ENCODE measurements at regions of chr15 and their contacts with region 1.

Region 1: DNA sequence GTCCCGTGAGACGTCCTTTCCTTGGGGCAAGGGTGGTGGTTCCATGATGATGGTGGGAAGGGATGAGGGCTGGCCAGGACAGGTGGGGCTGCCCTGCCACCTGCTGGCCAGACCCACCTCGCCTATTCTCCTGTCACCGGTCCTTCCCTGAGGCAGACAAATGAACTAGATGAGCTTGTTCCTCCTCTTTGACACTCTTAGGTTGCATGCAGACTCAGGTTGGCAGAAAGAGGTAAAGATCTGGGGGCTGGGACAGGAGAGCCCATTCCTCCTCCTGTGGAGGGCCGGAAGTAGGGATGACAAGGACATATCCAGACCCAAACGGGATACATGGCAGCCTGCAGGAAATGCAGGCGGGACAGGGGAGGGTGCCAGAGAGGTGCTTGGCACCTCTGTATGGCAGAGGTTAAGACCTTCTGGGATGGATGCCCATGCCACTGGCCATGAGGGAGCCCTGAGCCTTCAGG is 38.6 kb downstream of the ACSBG1 start:
- DNase-seq: no peak
- ATAC-seq: peak; percentile 99
- H3K4me3 ChIP-seq: no peak overlapping the region
- H3K27ac ChIP-seq: no peak overlapping the region
- H3K4me1 ChIP-seq: no peaks in the 10 kb centered on the region
- H3K27me3 ChIP-seq: peaks cover 0 to 2% of the 10 kb centered on the region in 2 experiments; a peak in 2 of 4 replicates
- CTCF ChIP-seq: peak; percentile 89 to 98 (median 93); a peak in 5 of 6 replicates
- EP300 ChIP-seq: no peak
- POLR2A ChIP-seq: no peak
- RAD21 ChIP-seq: peak; percentile 85

Region 2: DNA sequence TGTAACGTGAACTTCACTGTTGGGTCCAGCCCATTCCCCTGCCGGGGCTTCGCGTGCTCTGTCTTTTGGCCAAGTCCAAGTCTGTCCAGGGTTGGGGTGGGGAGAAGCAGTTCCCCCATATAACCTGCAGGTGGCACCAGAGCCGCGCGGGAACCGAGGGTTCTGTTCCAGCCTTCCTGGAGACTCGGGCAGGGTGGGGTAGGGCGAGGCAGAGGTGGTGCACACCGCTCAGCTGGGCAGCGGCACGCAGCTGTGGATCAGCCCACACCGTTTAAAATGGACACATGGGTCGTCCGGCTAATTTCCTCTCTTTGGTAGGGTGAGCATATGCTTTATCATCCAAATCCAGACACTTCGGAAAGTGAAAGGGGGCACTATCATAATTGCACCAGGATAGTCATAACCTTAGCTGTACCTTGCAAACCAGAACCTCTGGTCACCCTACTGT is 236.3 kb before region 1 on chr15:
- CTCF ChIA-PET with region 1: interaction called, 24 read pairs
- POLR2A ChIA-PET with region 1: interaction called, 3 read pairs
- RAD21 ChIA-PET with region 1: interaction called, 14 read pairs
- SMC1A ChIA-PET with region 1: interaction called, 20 read pairs
- in situ Hi-C with region 1: no loop called
- intact Hi-C with region 1: loop called (anchors 1 kb)
- DNase-seq: peak; percentile 13
- ATAC-seq: peak; percentile 98
- H3K4me3 ChIP-seq: peak overlapping the region; percentile 39; the same call in 1 of the 2 replicates
- H3K27ac ChIP-seq: no peak overlapping the region
- H3K4me1 ChIP-seq: peaks cover 6% of the 10 kb centered on the region
- H3K27me3 ChIP-seq: no peaks in the 10 kb centered on the region
- CTCF ChIP-seq: peak; percentile 93 to 98 (median 95)
- EP300 ChIP-seq: no peak
- POLR2A ChIP-seq: no peak
- RAD21 ChIP-seq: peak; percentile 93

Region 3: DNA sequence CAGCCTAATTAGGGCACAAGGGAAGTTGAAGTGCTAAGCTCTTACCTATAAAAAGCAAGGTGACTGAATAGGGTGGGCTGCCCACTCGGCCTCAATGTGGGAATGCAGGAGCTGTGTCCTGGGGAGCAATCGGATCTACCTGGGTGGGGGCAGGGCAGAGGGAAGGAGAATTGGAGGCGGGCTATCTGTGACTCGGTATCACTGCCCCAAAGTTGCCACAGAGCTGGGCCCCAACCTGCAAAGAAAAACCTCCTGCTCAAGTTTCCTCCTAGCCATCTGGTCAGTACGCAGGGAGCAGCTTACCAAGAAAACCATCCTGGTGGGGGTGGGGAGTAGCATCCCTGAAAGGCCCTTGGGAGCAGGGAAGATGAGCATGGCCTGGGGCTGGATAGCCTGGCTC is 75.2 kb before region 1 on chr15:
- CTCF ChIA-PET with region 1: interaction called, 200 read pairs
- POLR2A ChIA-PET with region 1: no interaction called
- RAD21 ChIA-PET with region 1: interaction called, 16 read pairs
- SMC1A ChIA-PET with region 1: interaction called, 25 read pairs
- in situ Hi-C with region 1: no loop called
- intact Hi-C with region 1: no loop called
- DNase-seq: no peak
- ATAC-seq: no peak
- H3K4me3 ChIP-seq: no peak overlapping the region
- H3K27ac ChIP-seq: no peak overlapping the region
- H3K4me1 ChIP-seq: no peaks in the 10 kb centered on the region
- H3K27me3 ChIP-seq: no peaks in the 10 kb centered on the region
- CTCF ChIP-seq: no peak
- EP300 ChIP-seq: no peak
- POLR2A ChIP-seq: no peak
- RAD21 ChIP-seq: no peak

Region 4: GRCh38 chr15:78149068-78149804 is 46.5 kb before region 1 on chr15 and contains the start of gene IDH3A:
- CTCF ChIA-PET with region 1: interaction called, 7 read pairs
- POLR2A ChIA-PET with region 1: no interaction called
- RAD21 ChIA-PET with region 1: interaction called, 23 read pairs
- SMC1A ChIA-PET with region 1: interaction called, 8 read pairs
- in situ Hi-C with region 1: no loop called
- intact Hi-C with region 1: no loop called
- DNase-seq: peak; percentile 80
- ATAC-seq: peak; percentile 91
- H3K4me3 ChIP-seq: peak within 1 kb of the TSS; percentile 87
- H3K27ac ChIP-seq: peak within 1 kb of the TSS; percentile 84
- H3K4me1 ChIP-seq: peaks cover 13% of the 10 kb centered on the region
- H3K27me3 ChIP-seq: no peaks in the 10 kb centered on the region
- CTCF ChIP-seq: no peak
- EP300 ChIP-seq: no peak
- POLR2A ChIP-seq: peak; percentile 94
- RAD21 ChIP-seq: no peak
- polyA plus RNA-seq, gene IDH3A: 197 to 231 TPM

Region 5: GRCh38 chr15:78177447-78177873 is 18.3 kb before region 1 on chr15:
- CTCF ChIA-PET with region 1: interaction called, 108 read pairs
- POLR2A ChIA-PET with region 1: interaction called, 3 read pairs
- RAD21 ChIA-PET with region 1: interaction called, 31 read pairs
- SMC1A ChIA-PET with region 1: interaction called, 38 read pairs
- in situ Hi-C with region 1: no loop called
- intact Hi-C with region 1: no loop called
- DNase-seq: no peak
- ATAC-seq: peak; percentile 77
- H3K4me3 ChIP-seq: no peak overlapping the region
- H3K27ac ChIP-seq: no peak overlapping the region
- H3K4me1 ChIP-seq: peaks cover 24% of the 10 kb centered on the region
- H3K27me3 ChIP-seq: no peaks in the 10 kb centered on the region
- CTCF ChIP-seq: peak; percentile 73 to 84 (median 76)
- EP300 ChIP-seq: no peak
- POLR2A ChIP-seq: no peak
- RAD21 ChIP-seq: peak; percentile 66

Region 6: DNA sequence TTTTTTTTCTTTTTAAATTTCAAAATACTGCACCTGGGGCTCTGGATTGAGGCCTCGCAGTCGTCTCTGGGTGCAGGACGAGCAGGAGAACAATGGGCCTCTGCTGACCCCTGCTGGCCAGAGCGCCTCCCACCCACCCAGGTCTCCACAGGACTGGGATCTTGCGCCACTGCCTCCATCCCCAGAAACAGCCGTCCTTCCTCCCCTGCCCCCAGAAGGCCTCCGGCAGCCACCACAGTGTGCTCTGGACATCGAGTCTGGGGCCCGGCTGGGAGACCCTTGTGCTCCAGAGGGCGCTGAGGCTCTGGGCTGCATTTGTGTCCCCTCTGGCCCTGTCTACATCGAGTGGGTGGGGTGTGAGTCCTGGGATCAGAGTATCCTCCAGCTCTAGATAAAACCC is 45.2 kb after region 1 on chr15:
- CTCF ChIA-PET with region 1: interaction called, 71 read pairs
- POLR2A ChIA-PET with region 1: interaction called, 5 read pairs
- RAD21 ChIA-PET with region 1: interaction called, 25 read pairs
- SMC1A ChIA-PET with region 1: interaction called, 55 read pairs
- in situ Hi-C with region 1: no loop called
- intact Hi-C with region 1: loop called (anchors 2 kb)
- DNase-seq: no peak
- ATAC-seq: peak; percentile 99
- H3K4me3 ChIP-seq: no peak overlapping the region
- H3K27ac ChIP-seq: no peak overlapping the region
- H3K4me1 ChIP-seq: no peaks in the 10 kb centered on the region
- H3K27me3 ChIP-seq: no peaks in the 10 kb centered on the region
- CTCF ChIP-seq: peak; percentile 84 to 93 (median 88)
- EP300 ChIP-seq: no peak
- POLR2A ChIP-seq: no peak
- RAD21 ChIP-seq: peak; percentile 86

Region 7: DNA sequence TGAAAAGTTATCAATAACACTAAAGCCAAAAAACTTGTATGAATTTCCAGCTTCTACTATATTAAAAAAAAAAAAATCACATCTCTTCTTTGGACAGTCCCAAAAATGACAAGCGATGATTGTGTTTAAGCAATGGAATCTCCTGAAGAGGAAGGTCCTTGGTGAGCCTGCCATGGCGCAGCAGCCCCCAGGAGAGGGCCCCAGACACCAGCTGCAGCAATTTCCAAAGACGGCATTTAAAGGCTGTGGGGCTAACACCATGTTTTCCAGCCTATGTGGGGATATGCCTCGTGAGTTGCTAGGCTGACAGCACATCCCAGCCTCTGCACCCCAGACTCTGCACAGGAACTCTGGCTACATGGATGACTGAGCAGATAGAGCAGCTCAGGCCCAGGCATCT is 89.0 kb after region 1 on chr15:
- CTCF ChIA-PET with region 1: no interaction called
- POLR2A ChIA-PET with region 1: no interaction called
- RAD21 ChIA-PET with region 1: no interaction called
- SMC1A ChIA-PET with region 1: no interaction called
- in situ Hi-C with region 1: no loop called
- intact Hi-C with region 1: no loop called
- DNase-seq: no peak
- ATAC-seq: no peak
- H3K4me3 ChIP-seq: no peak overlapping the region
- H3K27ac ChIP-seq: no peak overlapping the region
- H3K4me1 ChIP-seq: no peaks in the 10 kb centered on the region
- H3K27me3 ChIP-seq: no peaks in the 10 kb centered on the region
- CTCF ChIP-seq: no peak; a peak in 1 of 6 replicates
- EP300 ChIP-seq: no peak
- POLR2A ChIP-seq: no peak
- RAD21 ChIP-seq: no peak

Measured in GM12878 (cell line).